GM18951 (cell line): ENCODE measurements at regions of chr10 and their contacts with region 1.

Region 1: GRCh38 chr10:15027741-15028140 is 16.0 kb upstream of the OLAH start:
- POLR2A ChIP-seq: no peak

Region 2: DNA sequence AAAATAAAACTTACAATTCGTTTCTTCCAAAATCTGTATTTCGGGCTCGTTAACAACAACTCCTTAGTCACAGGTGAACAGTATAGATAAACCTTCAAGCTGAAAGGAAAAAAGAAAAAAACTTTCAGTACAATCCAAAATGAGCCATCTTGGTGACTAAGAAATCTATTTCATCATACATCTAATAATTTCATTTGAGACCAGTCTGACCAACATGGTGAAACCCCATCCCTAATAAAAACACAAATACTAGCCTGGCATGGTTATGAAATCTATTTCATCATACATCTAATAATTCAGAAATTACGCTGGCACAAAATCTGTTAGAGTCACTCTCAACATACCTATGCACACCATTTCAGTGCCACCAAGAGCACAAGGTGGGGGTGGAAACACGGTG is 82.7 kb before region 1 on chr10:
- in situ Hi-C with region 1: loop called (anchors 5 kb)
- POLR2A ChIP-seq: no peak

Region 3: GRCh38 chr10:15122477-15123030 is 94.8 kb after region 1 on chr10:
- in situ Hi-C with region 1: no loop called
- POLR2A ChIP-seq: no peak